Activated CD8-positive, alpha-beta memory T cell treated with anti-CD3 and anti-CD28 coated beads, Interleukin-2, amount 10 ng/mL, durations not matched to agents 7 days and 5 days (primary cell): ENCODE measurements at regions of chr7 and their contacts with region 1.

Region 1: GRCh38 chr7:101315336-101315735 is 6.3 kb downstream of the IFT22 start:
- DNase-seq: peak; percentile 67
- ATAC-seq: no peak
- H3K4me3 Mint-ChIP-seq: no peak overlapping the region
- H3K27ac Mint-ChIP-seq: no peak overlapping the region
- H3K4me1 Mint-ChIP-seq: no peaks in the 10 kb centered on the region
- H3K27me3 Mint-ChIP-seq: no peaks in the 10 kb centered on the region

Region 2: GRCh38 chr7:101333912-101334311 is 18.6 kb after region 1 on chr7:
- CTCF ChIA-PET with region 1: interaction called, 18 read pairs
- DNase-seq: no peak
- ATAC-seq: no peak
- H3K4me3 Mint-ChIP-seq: no peak overlapping the region
- H3K27ac Mint-ChIP-seq: no peak overlapping the region
- H3K4me1 Mint-ChIP-seq: peaks cover 14% of the 10 kb centered on the region
- H3K27me3 Mint-ChIP-seq: peaks cover 5% of the 10 kb centered on the region